Caki2 (cell line): ENCODE measurements at regions of chr1 and their contacts with region 1.

Region 1: DNA sequence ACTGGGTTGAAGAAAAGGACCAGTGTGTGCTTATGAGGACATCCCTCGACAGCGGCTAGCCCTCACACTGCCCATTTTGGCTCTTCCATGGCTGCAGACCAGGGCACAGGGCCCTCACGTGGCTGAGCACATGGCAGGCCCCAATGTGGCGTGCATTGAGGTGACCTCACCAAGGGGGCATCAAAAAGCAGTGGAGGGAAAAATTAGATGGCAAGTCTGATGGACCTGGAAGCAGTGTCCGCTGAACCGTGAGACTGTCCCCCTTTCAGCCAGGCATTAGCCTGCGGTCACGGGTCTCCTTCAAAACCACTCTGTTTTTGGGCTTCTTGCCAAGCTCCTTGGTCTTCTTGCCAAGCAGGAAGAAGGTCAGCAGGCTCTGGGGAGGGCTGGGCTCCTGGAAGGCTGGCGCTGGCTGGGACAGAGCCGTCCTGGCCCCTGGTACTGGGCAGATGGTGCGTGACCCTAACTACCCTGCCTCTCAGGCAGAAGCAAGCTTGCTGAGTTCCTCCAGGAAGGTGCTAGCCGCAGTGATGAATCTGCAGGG is 30.8 kb downstream of the TRIM67 start:
- DNase-seq: peak; percentile 99

Region 2: GRCh38 chr1:230550428-230550827 is 642.3 kb before region 1 on chr1:
- in situ Hi-C with region 1: no loop called
- DNase-seq: no peak

Region 3: DNA sequence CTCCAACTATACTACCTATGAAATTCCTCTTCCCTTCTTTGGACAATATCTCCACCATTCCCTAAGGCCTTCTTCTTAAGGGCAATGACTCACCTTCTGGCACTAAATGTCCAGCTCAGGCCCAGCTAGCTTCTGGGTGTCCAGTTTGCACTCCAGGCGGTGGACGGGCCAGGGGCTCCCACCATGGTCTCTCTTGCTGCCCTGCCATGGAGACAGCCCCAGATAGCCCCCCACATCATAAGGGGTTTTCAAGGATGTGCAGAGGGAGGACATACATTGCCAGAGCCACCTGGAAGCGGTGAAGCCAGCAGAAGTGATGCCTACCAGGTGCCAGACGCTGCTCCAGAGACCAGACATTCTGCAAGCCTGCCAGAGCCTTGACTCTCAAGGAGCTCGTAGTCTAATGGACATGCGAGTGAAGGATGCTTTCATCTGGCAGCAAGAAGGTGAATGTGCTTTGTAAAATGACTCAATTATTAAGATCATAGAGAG is 368.1 kb before region 1 on chr1:
- in situ Hi-C with region 1: loop called (anchors 25 kb)
- DNase-seq: no peak

Region 4: DNA sequence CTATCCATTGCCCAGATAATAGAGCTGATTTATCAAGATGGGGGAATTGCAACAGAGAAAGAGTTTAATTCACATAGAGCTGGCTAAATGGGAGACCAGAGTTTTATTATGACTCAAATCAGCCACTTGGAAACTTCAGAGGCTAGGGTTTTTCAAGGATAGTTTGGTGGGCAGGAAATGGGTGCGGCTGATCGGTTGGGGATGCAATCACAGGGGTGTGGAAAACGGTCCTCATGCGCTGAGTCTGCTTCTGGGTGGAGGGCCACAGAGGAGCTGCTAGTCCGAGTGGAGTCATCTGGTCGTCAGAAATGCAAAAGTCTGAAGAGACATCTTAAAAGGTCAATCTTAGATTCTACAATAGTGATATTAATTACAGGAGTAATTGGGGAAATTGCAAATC is 120.7 kb before region 1 on chr1:
- in situ Hi-C with region 1: no loop called
- DNase-seq: no peak

Region 5: DNA sequence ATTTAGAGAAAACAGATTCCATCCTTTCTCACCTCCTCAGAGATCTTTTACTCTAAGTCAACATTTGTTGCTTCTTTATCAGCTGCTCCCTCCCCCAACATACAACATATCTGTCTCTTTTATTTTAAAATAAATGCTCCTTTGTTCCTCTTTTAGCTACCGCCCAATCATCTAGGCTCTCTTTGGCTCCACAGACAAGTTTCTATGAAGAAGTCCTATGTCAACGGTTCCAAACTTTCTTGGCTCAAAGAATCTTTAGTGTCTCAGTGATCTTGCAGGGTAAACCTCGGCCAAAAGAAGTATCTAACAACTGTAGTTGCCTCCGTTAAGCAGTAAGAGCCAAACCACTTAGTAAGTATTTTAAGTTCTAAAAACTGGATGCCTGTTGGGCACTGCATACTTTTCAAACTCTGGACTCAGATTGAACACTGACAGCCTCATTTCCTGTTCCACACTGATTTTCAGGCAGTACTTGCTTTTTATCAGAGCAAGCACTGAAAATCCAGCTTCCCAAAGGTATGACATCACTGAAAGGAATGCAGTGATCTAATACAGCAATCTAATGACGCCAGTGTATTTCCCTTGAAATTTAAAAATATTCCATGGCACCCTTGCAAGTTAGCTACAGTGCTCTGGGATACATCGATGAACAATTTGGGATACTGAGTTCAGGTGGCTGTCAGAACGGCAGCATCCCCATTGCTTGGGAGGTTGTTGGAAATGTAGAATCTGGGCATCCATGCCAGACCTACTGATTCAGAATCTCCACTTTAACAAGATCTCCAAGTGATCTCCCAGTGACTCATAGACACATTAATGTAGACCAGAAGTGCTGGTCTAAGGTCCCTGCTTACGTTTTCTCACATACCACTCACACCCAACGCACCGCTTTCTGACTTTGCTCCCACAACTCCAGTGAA is 202.6 kb after region 1 on chr1:
- in situ Hi-C with region 1: no loop called
- DNase-seq: peak; percentile 88